ENCODE measurements at regions of chr20 and their contacts with region 1.

Region 1: DNA sequence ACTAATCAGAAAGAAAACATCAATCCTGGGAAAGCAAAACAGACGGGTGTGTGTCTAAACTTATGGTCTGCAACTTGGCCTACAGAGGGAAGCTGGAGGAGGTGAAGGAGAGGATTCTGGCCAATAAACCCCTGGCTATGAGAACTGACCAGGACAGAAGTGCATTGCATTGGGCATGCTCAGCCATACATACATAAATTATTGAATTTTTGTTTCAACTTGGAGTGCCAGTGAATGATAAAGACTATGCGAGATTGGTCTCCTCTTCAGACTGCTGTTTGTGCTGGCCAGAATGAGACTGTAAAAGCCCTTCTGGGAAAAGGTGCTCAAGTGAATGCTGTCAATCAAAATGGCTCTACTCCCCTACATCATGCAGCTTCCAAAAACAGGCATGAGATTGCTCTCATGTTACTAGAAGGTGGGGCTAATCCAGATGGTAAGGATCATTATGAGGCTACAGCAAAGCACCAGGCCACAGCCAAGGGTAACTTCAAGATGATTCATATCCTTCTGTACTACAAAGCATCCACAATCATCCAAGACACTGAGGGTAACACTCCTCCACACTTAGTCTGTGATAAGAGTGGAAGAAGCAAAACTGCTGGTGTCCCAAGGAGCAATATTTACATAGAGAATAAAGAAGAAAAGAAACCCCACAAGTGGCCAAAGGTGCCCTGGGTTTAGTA is 17.4 kb downstream of the ADNP start:
- DNase-seq: peak in 1 of 2 donors; percentile 14
- ATAC-seq: peak; percentile 59 to 79
- H3K4me3 ChIP-seq: no peak overlapping the region
- H3K27ac ChIP-seq: peak overlapping the region; percentile 41 to 66 (median 59)
- H3K4me1 ChIP-seq: peaks cover 69 to 90% of the 10 kb centered on the region in 2 donors
- H3K27me3 ChIP-seq: no peaks in the 10 kb centered on the region
- CTCF ChIP-seq: no peak
- POLR2A ChIP-seq: no peak

Region 2: DNA sequence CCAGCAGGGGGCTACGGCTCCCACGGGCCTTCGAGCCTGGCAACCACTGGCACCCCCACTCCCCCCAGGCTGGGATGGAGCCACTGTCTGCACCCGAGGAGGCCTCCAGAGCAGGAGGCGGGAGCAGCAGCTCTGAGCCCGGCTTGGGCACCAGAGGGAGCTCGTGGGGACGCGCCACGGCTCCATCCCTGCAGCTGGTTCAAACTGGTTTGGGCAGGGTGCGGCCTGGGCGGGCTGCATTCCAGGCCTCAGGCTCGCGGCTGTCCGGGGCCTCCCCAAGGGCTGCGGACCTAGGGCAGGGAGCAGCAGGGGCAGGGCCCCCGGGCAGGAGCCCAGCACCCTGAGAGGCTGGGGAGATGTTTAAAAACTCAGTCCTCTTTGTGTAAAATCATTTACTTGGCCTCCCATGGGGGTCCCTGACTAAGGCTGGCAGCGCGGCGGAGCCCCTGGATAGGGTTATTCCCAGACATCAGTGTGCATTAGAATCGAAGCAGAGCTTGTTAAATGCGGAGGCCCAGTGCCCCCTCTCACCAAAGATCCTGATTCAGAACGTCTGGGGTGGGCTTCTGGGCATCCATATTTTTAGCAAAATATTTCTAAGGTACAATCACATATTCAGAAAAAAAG is 123.1 kb before region 1 on chr20:
- in situ Hi-C with region 1: no loop called
- intact Hi-C with region 1: loop called (anchors 5 kb)
- DNase-seq: peak; percentile 40 to 57
- ATAC-seq: peak in 1 of 2 donors; percentile 45
- H3K4me3 ChIP-seq: peak overlapping the region; percentile 7 to 34 (median 24)
- H3K27ac ChIP-seq: peak overlapping the region; percentile 27 to 60 (median 50)
- H3K4me1 ChIP-seq: peaks cover 10 to 17% of the 10 kb centered on the region in 2 donors
- H3K27me3 ChIP-seq: no peaks in the 10 kb centered on the region
- CTCF ChIP-seq: peak; percentile 9 to 64 (median 49)
- POLR2A ChIP-seq: no peak